A549 (cell line): ENCODE measurements at regions of chr10 and their contacts with region 1.

Region 1: DNA sequence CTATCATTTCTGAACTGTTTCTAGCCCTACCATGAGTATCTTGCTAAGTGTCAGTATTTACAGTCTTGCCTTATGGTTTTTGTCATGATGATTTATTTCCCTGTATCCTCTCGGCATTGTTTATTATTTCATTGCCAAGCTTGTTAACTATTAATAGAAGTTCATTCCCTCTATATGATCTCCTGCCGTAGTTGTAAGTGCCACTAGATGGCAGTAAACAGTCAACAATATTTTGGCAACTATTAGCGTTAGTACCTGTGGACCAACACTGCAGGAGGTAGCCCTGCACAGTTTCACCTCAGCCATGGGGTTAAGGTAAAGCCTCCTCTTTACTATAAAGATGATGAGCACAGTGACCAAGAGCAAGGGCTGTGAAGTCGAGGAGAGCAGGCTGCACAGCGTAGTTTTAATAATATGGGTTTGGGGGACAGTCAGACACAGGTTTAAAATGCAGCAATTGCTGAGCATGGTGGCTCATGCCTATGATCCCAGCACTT is 26.1 kb upstream of the CCNJ start:
- DNase-seq: peak; percentile 69
- ATAC-seq: peak; percentile 96 to 99
- H3K4me3 ChIP-seq: no peak overlapping the region
- H3K27ac ChIP-seq: no peak overlapping the region
- H3K4me1 ChIP-seq: no peaks in the 10 kb centered on the region
- CTCF ChIP-seq: peak; percentile 85
- EP300 ChIP-seq: no peak
- POLR2A ChIP-seq: no peak
- RAD21 ChIP-seq: peak; percentile 81 to 87

Region 2: DNA sequence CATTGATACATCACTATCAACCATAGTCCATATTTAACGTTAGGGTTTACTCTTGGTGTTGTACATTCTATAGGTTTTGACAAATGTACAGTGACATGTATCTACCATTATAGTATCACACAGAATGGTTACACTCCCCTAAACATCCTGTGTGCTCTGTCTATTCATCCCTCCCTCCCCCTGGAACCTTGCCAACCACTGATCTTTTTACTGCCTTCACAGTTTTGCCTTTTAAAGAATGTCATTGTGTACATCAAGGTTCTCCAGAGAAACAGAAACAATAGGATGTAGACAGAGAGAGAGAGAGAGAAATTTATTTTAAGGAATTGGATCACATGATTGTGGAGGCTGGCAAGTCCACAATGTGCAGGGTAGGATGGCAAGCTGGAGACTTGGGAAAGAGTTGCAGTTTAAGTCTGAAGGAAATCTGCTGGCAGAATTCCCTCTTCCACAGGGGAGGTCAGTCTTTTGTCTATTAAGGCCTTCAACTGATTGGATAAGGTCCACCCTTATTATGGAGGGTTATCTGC is 18.9 kb before region 1 on chr10:
- CTCF ChIA-PET with region 1: interaction called, 14 read pairs
- POLR2A ChIA-PET with region 1: no interaction called
- DNase-seq: no peak
- ATAC-seq: no peak
- H3K4me3 ChIP-seq: no peak overlapping the region
- H3K27ac ChIP-seq: no peak overlapping the region
- H3K4me1 ChIP-seq: no peaks in the 10 kb centered on the region
- CTCF ChIP-seq: no peak
- EP300 ChIP-seq: no peak
- POLR2A ChIP-seq: no peak
- RAD21 ChIP-seq: no peak

Region 3: DNA sequence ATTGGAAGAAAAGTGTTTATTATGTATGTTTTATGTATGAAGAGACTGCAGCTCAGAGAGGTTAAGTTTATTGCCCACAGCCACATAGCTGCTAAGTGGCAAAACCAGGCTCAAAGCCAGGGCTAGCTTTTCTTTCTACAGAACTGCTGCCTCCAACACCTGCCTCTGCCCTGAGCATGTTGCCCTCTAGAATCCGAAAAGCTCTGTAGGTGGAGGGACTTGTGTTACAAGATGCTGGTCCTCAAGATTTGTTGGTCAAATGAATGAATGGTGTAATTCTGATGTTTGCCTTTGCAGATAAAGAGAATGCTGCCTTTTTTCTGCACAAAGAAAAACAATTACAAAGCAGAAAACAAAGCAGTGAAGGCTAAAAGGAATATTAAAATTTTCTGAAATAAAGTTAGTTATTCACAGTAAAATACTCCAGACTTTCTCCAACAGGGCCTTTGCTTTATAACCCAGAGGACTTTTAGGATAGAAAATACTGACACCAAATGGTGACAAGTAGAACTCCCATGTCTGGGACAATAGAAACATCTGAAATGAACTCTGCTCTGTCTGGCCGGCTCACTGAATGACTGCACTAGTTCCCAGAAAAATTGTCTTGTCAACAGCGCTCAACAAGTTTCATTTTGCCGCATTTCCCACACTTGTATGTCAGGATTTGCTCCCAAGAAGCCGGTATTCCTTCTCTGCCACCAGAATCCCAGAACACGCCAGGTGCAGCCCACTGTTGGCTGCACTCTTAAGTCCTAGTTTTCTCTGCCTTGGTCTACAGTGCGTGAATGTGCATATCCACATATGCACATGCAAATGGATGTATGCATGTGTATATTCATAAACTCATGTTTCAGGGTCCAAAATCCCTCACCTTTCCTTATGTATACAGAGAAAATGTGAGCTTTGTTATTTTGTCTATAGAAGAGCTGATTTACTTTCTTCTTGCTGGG is 276.0 kb after region 1 on chr10:
- CTCF ChIA-PET with region 1: interaction called, 148 read pairs
- POLR2A ChIA-PET with region 1: no interaction called
- DNase-seq: peak; percentile 35 to 59
- ATAC-seq: peak; percentile 95 to 96
- H3K4me3 ChIP-seq: no peak overlapping the region
- H3K27ac ChIP-seq: no peak overlapping the region
- H3K4me1 ChIP-seq: peaks cover 2% of the 10 kb centered on the region
- CTCF ChIP-seq: peak; percentile 65
- EP300 ChIP-seq: no peak
- POLR2A ChIP-seq: no peak
- RAD21 ChIP-seq: peak; percentile 66 to 73

Region 4: DNA sequence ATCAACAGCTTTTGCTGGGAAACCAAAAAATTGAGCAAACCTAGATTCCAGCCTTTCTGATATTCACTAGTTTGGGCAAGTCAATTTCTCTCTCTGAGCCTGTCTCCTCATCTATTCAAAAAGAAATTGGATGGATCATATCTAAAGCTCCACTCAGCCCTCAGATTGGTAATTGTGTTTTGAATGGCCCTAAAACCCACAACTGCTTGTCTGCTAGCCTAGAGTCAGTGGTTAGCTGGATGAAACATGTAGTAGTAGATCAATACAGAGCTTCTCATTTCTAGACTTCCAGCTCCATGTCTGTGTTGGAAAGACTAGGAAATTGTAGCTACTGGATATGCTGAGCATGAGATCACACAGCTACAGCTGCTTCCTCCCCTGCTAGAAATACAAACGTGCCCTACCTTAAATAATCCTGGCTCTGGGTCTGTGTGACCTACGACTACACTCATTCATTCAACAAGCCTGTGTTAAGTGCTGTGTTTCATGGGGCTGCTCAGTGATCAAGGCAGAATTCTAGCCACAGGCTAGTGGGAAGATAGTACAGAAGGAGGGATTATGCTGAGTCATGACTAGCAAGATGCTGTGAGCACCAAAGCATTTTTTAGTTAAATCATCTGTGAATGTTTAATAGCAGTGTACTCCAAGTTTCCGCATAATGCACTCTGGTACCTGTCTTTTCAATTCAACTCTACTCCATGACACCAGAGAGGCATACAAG is 302.7 kb after region 1 on chr10:
- CTCF ChIA-PET with region 1: interaction called, 13 read pairs
- POLR2A ChIA-PET with region 1: no interaction called
- DNase-seq: peak in 1 of 2 experiments; percentile 13
- ATAC-seq: peak; percentile 23 to 30; a peak in 3 of 6 replicates
- H3K4me3 ChIP-seq: no peak overlapping the region
- H3K27ac ChIP-seq: peak overlapping the region; percentile 34 to 67; a peak in 4 of 6 replicates
- H3K4me1 ChIP-seq: peaks cover 8% of the 10 kb centered on the region; the same call in 1 of the 3 replicates
- CTCF ChIP-seq: no peak
- EP300 ChIP-seq: no peak
- POLR2A ChIP-seq: no peak
- RAD21 ChIP-seq: no peak

Region 5: GRCh38 chr10:96339957-96340904 is 323.0 kb after region 1 on chr10:
- CTCF ChIA-PET with region 1: interaction called, 15 read pairs
- POLR2A ChIA-PET with region 1: no interaction called
- DNase-seq: peak; percentile 36 to 71
- ATAC-seq: peak; percentile 67 to 93; a peak in 4 of 6 replicates
- H3K4me3 ChIP-seq: no peak overlapping the region
- H3K27ac ChIP-seq: no peak overlapping the region
- H3K4me1 ChIP-seq: no peaks in the 10 kb centered on the region
- CTCF ChIP-seq: peak; percentile 61
- EP300 ChIP-seq: no peak
- POLR2A ChIP-seq: no peak
- RAD21 ChIP-seq: peak; percentile 39 to 58; a peak in 3 of 5 replicates